Mammary epithelial cell (primary cell): ENCODE measurements at regions of chr9 and their contacts with region 1.

Region 1: GRCh38 chr9:22147813-22148524 is 138.9 kb upstream of the CDKN2B start:
- DNase-seq: peak; percentile 99
- H3K4me3 ChIP-seq: no peak overlapping the region
- H3K27ac ChIP-seq: peak overlapping the region; percentile 78
- H3K4me1 ChIP-seq: peaks cover 35% of the 10 kb centered on the region
- H3K27me3 ChIP-seq: no peaks in the 10 kb centered on the region
- CTCF ChIP-seq: no peak

Region 2: DNA sequence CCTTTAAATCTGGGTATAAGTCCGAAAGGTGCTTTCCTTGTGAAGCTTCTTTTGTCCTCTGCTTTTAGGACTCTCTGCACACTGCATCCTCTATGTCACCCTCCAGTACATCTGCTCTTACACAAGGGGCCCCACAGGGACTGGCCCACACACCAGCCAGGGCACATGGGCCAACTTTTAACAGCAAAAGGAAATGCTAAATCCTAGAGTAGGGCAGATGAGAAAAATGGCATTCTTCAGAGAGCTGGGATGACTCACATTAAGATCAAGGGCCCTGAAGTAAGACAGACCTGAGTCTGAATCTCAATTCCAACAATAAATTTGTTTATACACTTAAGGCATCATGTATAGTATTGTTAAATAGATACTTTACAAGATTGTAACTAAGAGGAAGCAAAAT is 98.6 kb before region 1 on chr9:
- CTCF ChIA-PET with region 1: no interaction called
- dilution Hi-C with region 1: loop called (anchors 5 kb)
- in situ Hi-C with region 1: no loop called
- intact Hi-C with region 1: no loop called
- DNase-seq: peak; percentile 28
- H3K4me3 ChIP-seq: no peak overlapping the region
- H3K27ac ChIP-seq: no peak overlapping the region
- H3K4me1 ChIP-seq: peaks cover 30% of the 10 kb centered on the region
- H3K27me3 ChIP-seq: no peaks in the 10 kb centered on the region
- CTCF ChIP-seq: no peak

Region 3: DNA sequence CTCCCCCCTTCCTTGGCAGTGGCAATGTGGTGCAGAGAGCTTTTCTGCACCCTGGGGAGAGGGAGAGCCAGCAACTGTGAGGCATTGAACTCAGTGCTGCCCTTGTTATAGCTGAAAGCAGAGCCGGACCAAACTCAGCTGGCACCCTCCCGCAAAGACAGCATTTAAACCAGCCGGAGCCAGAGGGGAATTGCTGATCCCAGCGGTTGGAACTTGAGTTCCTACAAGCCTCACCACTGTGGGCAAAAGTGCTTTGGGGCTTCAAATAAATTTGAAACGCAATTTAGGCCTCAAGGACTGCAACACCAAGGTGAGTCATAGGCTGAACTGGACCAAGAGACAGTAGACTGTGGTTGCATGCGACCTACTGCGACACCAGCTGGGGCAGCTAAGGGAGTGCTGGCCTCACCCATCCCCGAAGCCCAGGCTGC is 68.8 kb after region 1 on chr9:
- CTCF ChIA-PET with region 1: interaction called, 3 read pairs
- dilution Hi-C with region 1: no loop called
- in situ Hi-C with region 1: no loop called
- intact Hi-C with region 1: loop called (anchors 2 kb)
- DNase-seq: no peak
- H3K4me3 ChIP-seq: no peak overlapping the region
- H3K27ac ChIP-seq: no peak overlapping the region
- H3K4me1 ChIP-seq: peaks cover 18% of the 10 kb centered on the region
- H3K27me3 ChIP-seq: no peaks in the 10 kb centered on the region
- CTCF ChIP-seq: no peak